HEK293T (cell line): ENCODE measurements at regions of chr1 and their contacts with region 1.

Region 1: DNA sequence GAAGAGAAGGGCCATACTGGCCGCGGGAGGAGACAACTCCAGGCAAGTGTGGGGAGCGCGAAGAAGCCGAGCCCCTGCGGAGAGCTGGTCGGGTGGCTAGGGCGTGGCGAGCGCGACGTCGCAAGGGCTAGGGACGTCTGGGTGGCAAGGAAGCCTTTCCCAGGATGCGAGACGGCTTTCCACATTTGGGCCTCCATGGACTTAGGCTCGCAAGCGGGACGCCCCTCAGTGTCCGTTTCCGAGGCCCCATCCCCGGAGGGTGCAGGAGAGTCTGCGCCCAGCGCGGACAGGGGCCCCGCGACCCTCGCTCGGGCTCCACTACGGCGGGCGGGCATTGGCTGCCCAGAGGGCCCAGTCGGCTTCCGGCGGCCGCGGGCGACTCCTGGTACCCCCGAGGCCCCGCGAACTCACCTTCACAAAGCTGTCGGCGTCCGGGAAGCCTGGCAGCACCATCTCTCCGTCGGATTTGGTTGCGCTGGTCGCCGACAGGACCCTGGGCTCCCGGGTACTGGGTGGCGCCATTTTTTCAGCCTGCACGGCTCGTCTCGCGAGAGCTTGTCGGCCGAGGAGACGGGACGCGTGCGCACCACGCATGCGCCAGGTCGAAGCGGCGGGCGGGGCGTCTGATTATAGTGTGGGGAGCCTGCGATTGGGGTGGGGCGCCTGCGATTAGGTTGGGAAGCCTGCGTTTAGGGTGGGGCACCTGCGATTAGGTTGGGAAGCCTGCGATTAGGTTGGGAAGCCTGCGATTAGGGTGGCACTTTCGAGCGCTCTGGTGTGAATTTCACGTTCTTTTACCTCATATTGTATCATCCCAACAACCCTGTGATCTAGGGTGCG is at the start of gene EXOSC10:
- DNase-seq: peak; percentile 99

Region 2: DNA sequence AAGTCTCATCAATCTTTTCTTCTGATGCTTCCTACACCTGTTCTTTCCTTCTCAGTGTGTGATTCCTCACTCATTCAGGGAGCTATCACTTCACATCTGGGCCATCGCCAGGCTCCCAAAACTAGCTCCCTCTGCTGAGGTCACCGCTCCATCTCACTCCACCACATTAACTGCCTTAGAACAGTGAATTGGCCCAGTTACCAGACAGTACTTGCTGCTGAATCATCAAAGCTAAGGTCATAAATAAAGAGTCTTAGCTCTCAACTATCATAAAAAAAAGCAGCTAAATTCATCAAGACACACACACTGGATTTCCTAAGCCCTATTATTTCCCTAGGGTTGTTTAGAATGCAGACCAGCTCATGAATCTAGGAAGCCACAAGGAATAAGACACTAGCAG is 20.9 kb before region 1 on chr1:
- CTCF ChIA-PET with region 1: no interaction called
- POLR2A ChIA-PET with region 1: interaction called, 14 read pairs
- DNase-seq: no peak